GM12878 (cell line): ENCODE measurements at regions of chr15 and their contacts with region 1.

Region 1: GRCh38 chr15:78108299-78109084 is 16.1 kb downstream of the SH2D7 start:
- DNase-seq: peak; percentile 43
- ATAC-seq: peak; percentile 84
- H3K4me3 ChIP-seq: no peak overlapping the region
- H3K27ac ChIP-seq: no peak overlapping the region
- H3K4me1 ChIP-seq: peaks cover 22% of the 10 kb centered on the region
- H3K27me3 ChIP-seq: no peaks in the 10 kb centered on the region
- CTCF ChIP-seq: peak; percentile 89 to 97 (median 94)
- EP300 ChIP-seq: no peak
- POLR2A ChIP-seq: no peak
- RAD21 ChIP-seq: peak; percentile 77

Region 2: GRCh38 chr15:77901974-77902750 is 206.3 kb before region 1 on chr15:
- CTCF ChIA-PET with region 1: interaction called, 3 read pairs
- POLR2A ChIA-PET with region 1: no interaction called
- RAD21 ChIA-PET with region 1: interaction called, 3 read pairs
- SMC1A ChIA-PET with region 1: no interaction called
- in situ Hi-C with region 1: no loop called
- intact Hi-C with region 1: loop called (anchors 5 kb)
- DNase-seq: no peak
- ATAC-seq: peak; percentile 63
- H3K4me3 ChIP-seq: no peak overlapping the region
- H3K27ac ChIP-seq: no peak overlapping the region
- H3K4me1 ChIP-seq: no peaks in the 10 kb centered on the region
- H3K27me3 ChIP-seq: no peaks in the 10 kb centered on the region
- CTCF ChIP-seq: peak; percentile 15 to 42 (median 16); a peak in 2 of 6 replicates
- EP300 ChIP-seq: no peak
- POLR2A ChIP-seq: no peak
- RAD21 ChIP-seq: no peak

Region 3: GRCh38 chr15:78000091-78000926 is 108.2 kb before region 1 on chr15:
- CTCF ChIA-PET with region 1: interaction called, 72 read pairs
- POLR2A ChIA-PET with region 1: interaction called, 3 read pairs
- RAD21 ChIA-PET with region 1: interaction called, 25 read pairs
- SMC1A ChIA-PET with region 1: interaction called, 29 read pairs
- in situ Hi-C with region 1: no loop called
- intact Hi-C with region 1: loop called (anchors 1 kb)
- DNase-seq: no peak
- ATAC-seq: peak; percentile 87
- H3K4me3 ChIP-seq: no peak overlapping the region
- H3K27ac ChIP-seq: no peak overlapping the region
- H3K4me1 ChIP-seq: peaks cover 16% of the 10 kb centered on the region
- H3K27me3 ChIP-seq: no peaks in the 10 kb centered on the region
- CTCF ChIP-seq: peak; percentile 62 to 82 (median 72)
- EP300 ChIP-seq: no peak
- POLR2A ChIP-seq: no peak
- RAD21 ChIP-seq: peak; percentile 82

Region 4: DNA sequence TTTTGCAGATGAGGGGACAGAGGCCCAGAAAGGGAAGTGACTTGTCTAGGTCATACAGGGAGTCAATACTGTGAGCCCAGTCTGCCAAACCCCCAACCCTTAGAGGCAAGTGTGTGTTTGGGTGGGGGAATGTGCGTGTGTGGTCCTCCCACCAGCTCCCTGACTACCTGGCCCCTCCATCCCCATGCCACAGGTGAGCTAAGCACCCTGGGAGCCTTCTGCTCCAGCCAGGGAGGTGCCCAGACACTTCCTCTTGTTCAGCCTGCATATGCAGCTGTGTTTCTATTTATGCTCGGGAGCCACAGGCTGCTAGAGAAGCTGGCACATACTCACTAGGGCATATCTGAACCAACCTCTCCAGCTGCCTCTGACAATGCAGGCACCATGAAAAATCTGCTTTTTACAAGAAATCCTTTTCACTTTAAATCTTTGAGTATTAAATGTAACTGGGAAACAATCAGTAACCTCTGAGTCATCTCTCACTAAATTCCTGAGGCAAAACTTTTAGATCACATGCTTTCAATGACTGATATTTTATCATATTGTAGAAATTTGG is 51.7 kb before region 1 on chr15:
- CTCF ChIA-PET with region 1: interaction called, 33 read pairs
- POLR2A ChIA-PET with region 1: no interaction called
- RAD21 ChIA-PET with region 1: interaction called, 7 read pairs
- SMC1A ChIA-PET with region 1: interaction called, 10 read pairs
- in situ Hi-C with region 1: no loop called
- intact Hi-C with region 1: no loop called
- DNase-seq: no peak
- ATAC-seq: peak; percentile 78
- H3K4me3 ChIP-seq: no peak overlapping the region
- H3K27ac ChIP-seq: peak overlapping the region; percentile 57
- H3K4me1 ChIP-seq: peaks cover 63% of the 10 kb centered on the region
- H3K27me3 ChIP-seq: no peaks in the 10 kb centered on the region
- CTCF ChIP-seq: no peak
- EP300 ChIP-seq: no peak
- POLR2A ChIP-seq: no peak
- RAD21 ChIP-seq: no peak

Region 5: GRCh38 chr15:78087951-78088772 is 20.3 kb before region 1 on chr15:
- CTCF ChIA-PET with region 1: interaction called, 11 read pairs
- POLR2A ChIA-PET with region 1: no interaction called
- RAD21 ChIA-PET with region 1: interaction called, 11 read pairs
- SMC1A ChIA-PET with region 1: interaction called, 13 read pairs
- in situ Hi-C with region 1: no loop called
- intact Hi-C with region 1: no loop called
- DNase-seq: no peak
- ATAC-seq: peak; percentile 93
- H3K4me3 ChIP-seq: no peak overlapping the region
- H3K27ac ChIP-seq: peak overlapping the region; percentile 26; the same call in 1 of the 2 replicates
- H3K4me1 ChIP-seq: peaks cover 16% of the 10 kb centered on the region
- H3K27me3 ChIP-seq: no peaks in the 10 kb centered on the region
- CTCF ChIP-seq: no peak
- EP300 ChIP-seq: no peak
- POLR2A ChIP-seq: no peak
- RAD21 ChIP-seq: no peak

Region 6: GRCh38 chr15:78195735-78196201 is 87.3 kb after region 1 on chr15:
- CTCF ChIA-PET with region 1: interaction called, 80 read pairs
- POLR2A ChIA-PET with region 1: no interaction called
- RAD21 ChIA-PET with region 1: interaction called, 48 read pairs
- SMC1A ChIA-PET with region 1: interaction called, 77 read pairs
- in situ Hi-C with region 1: loop called (anchors 5 kb)
- intact Hi-C with region 1: loop called (anchors 1 kb)
- DNase-seq: no peak
- ATAC-seq: peak; percentile 99
- H3K4me3 ChIP-seq: no peak overlapping the region
- H3K27ac ChIP-seq: no peak overlapping the region
- H3K4me1 ChIP-seq: no peaks in the 10 kb centered on the region
- H3K27me3 ChIP-seq: peaks cover 0 to 2% of the 10 kb centered on the region in 2 experiments; a peak in 2 of 4 replicates
- CTCF ChIP-seq: peak; percentile 89 to 98 (median 93); a peak in 5 of 6 replicates
- EP300 ChIP-seq: no peak
- POLR2A ChIP-seq: no peak
- RAD21 ChIP-seq: peak; percentile 85

Region 7: GRCh38 chr15:78382114-78382880 is 273.8 kb after region 1 on chr15:
- CTCF ChIA-PET with region 1: no interaction called
- POLR2A ChIA-PET with region 1: no interaction called
- RAD21 ChIA-PET with region 1: no interaction called
- SMC1A ChIA-PET with region 1: no interaction called
- in situ Hi-C with region 1: no loop called
- intact Hi-C with region 1: no loop called
- DNase-seq: no peak
- ATAC-seq: no peak
- H3K4me3 ChIP-seq: no peak overlapping the region
- H3K27ac ChIP-seq: no peak overlapping the region
- H3K4me1 ChIP-seq: no peaks in the 10 kb centered on the region
- H3K27me3 ChIP-seq: peaks cover 0 to 1% of the 10 kb centered on the region in 2 experiments; a peak in 2 of 4 replicates
- CTCF ChIP-seq: no peak
- EP300 ChIP-seq: no peak
- POLR2A ChIP-seq: no peak
- RAD21 ChIP-seq: no peak

Region 8: GRCh38 chr15:78481917-78482316 is 373.4 kb after region 1 on chr15:
- CTCF ChIA-PET with region 1: no interaction called
- POLR2A ChIA-PET with region 1: no interaction called
- RAD21 ChIA-PET with region 1: no interaction called
- SMC1A ChIA-PET with region 1: no interaction called
- in situ Hi-C with region 1: no loop called
- intact Hi-C with region 1: loop called (anchors 5 kb)
- DNase-seq: no peak
- ATAC-seq: no peak
- H3K4me3 ChIP-seq: no peak overlapping the region
- H3K27ac ChIP-seq: no peak overlapping the region
- H3K4me1 ChIP-seq: no peaks in the 10 kb centered on the region
- H3K27me3 ChIP-seq: no peaks in the 10 kb centered on the region
- CTCF ChIP-seq: no peak
- EP300 ChIP-seq: no peak
- POLR2A ChIP-seq: no peak
- RAD21 ChIP-seq: no peak

Region 9: DNA sequence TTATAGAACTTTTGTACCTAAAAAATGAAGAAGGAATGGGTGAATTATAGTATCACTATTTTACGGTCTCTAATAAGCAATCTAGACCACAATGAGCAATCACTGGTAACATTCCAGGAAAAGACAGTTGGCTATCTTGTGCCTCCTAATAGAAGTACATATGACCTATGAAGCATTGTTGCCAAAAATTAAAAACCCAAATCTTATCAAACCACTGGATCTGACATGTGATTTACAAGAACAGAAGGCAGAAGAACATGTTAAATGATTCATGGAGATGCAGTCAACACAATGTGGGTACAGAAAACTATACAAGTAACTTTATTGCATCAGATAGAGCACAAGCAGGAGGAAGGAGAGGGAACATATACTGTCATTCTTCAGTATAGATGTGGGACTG is 384.4 kb after region 1 on chr15:
- CTCF ChIA-PET with region 1: no interaction called
- POLR2A ChIA-PET with region 1: no interaction called
- RAD21 ChIA-PET with region 1: no interaction called
- SMC1A ChIA-PET with region 1: no interaction called
- in situ Hi-C with region 1: no loop called
- intact Hi-C with region 1: no loop called
- DNase-seq: no peak
- ATAC-seq: no peak
- H3K4me3 ChIP-seq: no peak overlapping the region
- H3K27ac ChIP-seq: no peak overlapping the region
- H3K4me1 ChIP-seq: no peaks in the 10 kb centered on the region
- H3K27me3 ChIP-seq: no peaks in the 10 kb centered on the region
- CTCF ChIP-seq: no peak
- EP300 ChIP-seq: no peak
- POLR2A ChIP-seq: no peak
- RAD21 ChIP-seq: no peak